H1 (cell line): ENCODE measurements at regions of chr12 and their contacts with region 1.

Region 1: DNA sequence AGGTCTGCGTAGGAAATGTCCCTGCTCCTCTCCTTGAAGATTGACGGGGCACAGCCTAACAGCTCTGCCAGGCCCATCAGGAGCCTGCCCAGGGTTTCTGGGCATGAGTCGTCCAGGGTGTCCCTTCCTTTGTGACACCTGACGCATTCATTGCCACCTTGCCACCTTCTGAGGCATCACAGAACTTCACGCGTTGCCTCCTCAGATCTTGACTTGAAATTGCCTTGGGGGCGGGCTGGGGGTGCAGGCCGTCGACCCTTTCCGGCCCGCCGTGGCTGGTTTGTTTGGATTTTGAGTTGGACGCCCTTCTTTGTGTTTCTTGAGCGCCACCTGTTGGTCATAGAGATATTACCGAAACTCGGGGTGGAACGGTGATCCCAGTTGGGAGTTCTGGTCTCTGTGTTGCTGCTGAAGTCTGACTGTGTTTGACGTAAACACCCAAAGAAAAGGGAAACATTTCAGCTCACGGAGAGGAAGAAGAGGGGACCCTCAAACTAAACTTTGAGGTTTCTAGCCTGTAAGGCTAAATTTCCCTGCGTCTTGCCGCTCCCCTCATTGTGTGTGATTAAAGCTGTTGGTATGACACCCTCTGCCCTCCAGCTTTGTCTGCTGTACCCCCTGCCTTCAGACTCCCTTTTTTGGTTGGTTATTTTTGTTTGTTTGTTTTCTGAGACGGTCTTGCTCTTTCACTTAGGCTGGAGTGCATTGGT is 44.6 kb downstream of the MLXIP start:
- DNase-seq: peak in 1 of 2 experiments; percentile 92
- H3K4me3 ChIP-seq: no peak overlapping the region
- H3K27ac ChIP-seq: no peak overlapping the region
- H3K4me1 ChIP-seq: peaks cover 0 to 6% (median 3%) of the 10 kb centered on the region in 4 experiments; a peak in 4 of 7 replicates
- H3K27me3 ChIP-seq: no peaks in the 10 kb centered on the region
- CTCF ChIP-seq: peak; percentile 42 to 73 (median 68)
- EP300 ChIP-seq: no peak
- POLR2A ChIP-seq: no peak
- RAD21 ChIP-seq: peak; percentile 76 to 87

Region 2: GRCh38 chr12:122064025-122064777 is 59.0 kb before region 1 on chr12:
- CTCF ChIA-PET with region 1: interaction called, 379 read pairs
- POLR2A ChIA-PET with region 1: interaction called, 4 read pairs
- DNase-seq: peak; percentile 87 to 88
- H3K4me3 ChIP-seq: peak overlapping the region; percentile 2 to 44 (median 10); a peak in 4 of 8 replicates
- H3K27ac ChIP-seq: 0 out of 2 replicates have a peak overlapping the region, but pooled peaks have one; percentile 24
- H3K4me1 ChIP-seq: peaks cover 0 to 21% (median 10%) of the 10 kb centered on the region in 4 experiments; a peak in 6 of 7 replicates
- H3K27me3 ChIP-seq: no peaks in the 10 kb centered on the region
- CTCF ChIP-seq: peak; percentile 45 to 78 (median 47)
- EP300 ChIP-seq: no peak
- POLR2A ChIP-seq: peak in 1 of 2 experiments; percentile 27; a peak in 1 of 3 replicates
- RAD21 ChIP-seq: peak; percentile 25 to 40

Region 3: DNA sequence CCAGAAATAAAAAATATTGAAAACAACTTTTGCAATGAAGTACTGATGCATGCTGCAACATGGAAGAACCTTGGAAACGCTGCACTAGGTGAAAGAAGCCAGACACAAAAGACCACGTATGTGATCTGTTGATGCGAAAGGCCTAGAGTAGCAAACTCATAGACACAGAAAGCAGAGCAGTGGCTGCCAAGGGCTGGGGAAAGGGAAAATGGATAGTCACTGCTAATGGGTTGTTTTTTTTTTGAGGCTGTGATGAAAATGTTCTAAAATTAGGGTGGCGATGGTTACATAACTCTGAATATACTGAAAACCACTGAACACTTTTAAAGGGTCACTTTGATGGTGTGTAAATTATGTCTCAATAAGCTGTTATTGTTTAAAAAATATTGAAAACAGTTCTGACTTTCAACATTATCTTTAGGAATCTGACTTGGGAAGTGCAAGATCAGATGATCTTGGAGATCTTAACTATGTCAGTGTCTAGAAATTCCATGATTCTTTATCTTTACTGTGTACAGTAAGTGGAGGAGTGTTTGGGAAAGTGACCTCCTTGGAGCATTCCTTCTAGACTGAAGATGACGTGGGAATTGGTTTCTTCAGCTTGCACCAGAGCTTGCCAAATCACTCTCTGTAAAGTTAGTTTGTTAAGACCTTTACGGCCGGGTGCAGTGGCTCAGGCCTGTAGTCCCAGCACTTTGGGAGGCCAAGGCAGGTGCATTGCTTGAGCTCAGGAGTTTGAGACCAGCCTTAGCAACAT is 32.3 kb before region 1 on chr12:
- CTCF ChIA-PET with region 1: interaction called, 52 read pairs
- POLR2A ChIA-PET with region 1: interaction called, 3 read pairs
- DNase-seq: no peak
- H3K4me3 ChIP-seq: no peak overlapping the region
- H3K27ac ChIP-seq: no peak overlapping the region
- H3K4me1 ChIP-seq: peaks cover 0 to 4% (median 1%) of the 10 kb centered on the region in 4 experiments; a peak in 4 of 7 replicates
- H3K27me3 ChIP-seq: no peaks in the 10 kb centered on the region; a peak in 1 of 7 replicates
- CTCF ChIP-seq: no peak
- EP300 ChIP-seq: no peak
- POLR2A ChIP-seq: no peak
- RAD21 ChIP-seq: no peak

Region 4: DNA sequence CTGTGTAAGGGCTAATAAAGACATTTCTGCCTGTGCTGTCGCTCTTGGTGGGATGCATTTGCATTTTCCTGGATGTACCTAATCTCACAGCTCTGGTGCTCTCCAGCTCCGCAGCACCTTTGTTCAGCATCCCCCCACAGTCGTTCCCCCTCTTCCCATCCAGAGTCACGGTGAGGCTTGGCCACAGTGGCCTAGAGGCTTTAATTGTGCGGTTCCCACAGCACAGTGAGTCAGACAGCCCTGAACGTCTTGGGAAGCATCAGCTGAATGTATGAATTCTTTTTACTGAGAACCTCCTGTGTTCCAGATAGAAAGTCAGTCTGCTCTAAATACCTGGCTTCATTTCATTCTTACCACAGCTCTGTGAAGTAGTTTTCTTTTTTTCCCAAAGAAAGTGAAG is 15.9 kb before region 1 on chr12:
- CTCF ChIA-PET with region 1: interaction called, 24 read pairs
- POLR2A ChIA-PET with region 1: interaction called, 4 read pairs
- DNase-seq: no peak
- H3K4me3 ChIP-seq: no peak overlapping the region
- H3K27ac ChIP-seq: no peak overlapping the region
- H3K4me1 ChIP-seq: no peaks in the 10 kb centered on the region; a peak in 1 of 7 replicates
- H3K27me3 ChIP-seq: no peaks in the 10 kb centered on the region
- CTCF ChIP-seq: no peak
- EP300 ChIP-seq: no peak
- POLR2A ChIP-seq: no peak
- RAD21 ChIP-seq: no peak

Region 5: DNA sequence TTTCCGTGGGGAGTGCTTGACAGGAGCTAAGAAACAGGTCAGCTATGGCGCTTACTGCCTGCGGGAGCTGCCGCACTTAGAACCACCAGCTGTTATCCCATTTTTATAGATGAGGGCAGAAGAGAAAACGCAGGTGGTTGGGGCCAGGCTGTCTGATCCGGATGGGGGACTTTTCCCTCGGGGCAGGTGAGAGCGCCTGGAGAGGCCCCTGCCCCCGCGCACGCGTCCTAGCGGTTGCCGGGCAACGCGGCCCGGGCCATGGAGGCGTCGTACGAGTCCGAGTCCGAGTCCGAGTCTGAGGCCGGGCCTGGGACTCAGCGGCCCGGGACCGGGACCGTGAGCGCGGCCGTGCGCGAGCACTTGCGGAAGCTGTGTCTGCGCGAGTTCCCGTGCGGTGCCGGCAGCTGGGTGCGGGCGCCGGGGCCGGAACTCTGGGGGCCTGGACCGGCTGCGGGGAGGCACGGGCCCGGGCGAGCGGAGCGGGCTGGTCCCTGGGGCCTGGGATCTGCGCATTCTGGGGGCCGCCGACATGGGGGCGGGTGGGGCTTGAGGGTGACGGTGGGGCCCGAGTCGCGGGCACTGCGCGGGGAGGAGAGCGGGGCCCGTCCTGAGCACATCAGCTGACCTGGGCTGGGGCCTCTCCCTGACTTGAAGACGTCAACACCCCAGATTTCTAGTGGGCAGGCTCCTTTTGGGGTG is 59.8 kb after region 1 on chr12 and contains the start of gene LRRC43:
- CTCF ChIA-PET with region 1: interaction called, 10 read pairs
- POLR2A ChIA-PET with region 1: no interaction called
- DNase-seq: peak in 1 of 2 experiments; percentile 86
- H3K4me3 ChIP-seq: peak within 1 kb of the TSS; percentile 28 to 67 (median 40)
- H3K27ac ChIP-seq: no peak within 1 kb of the TSS
- H3K4me1 ChIP-seq: peaks cover 0 to 4% (median 2%) of the 10 kb centered on the region in 4 experiments; a peak in 3 of 7 replicates
- H3K27me3 ChIP-seq: peaks cover 0 to 6% (median 2%) of the 10 kb centered on the region in 4 experiments; a peak in 5 of 7 replicates
- CTCF ChIP-seq: peak in 1 of 3 experiments; percentile 7; a peak in 1 of 4 replicates
- EP300 ChIP-seq: no peak
- POLR2A ChIP-seq: no peak
- RAD21 ChIP-seq: no peak
- total RNA-seq, gene LRRC43: 0.15 and 0.35 TPM in 2 replicates

Region 6: GRCh38 chr12:122322501-122322900 is 199.3 kb after region 1 on chr12:
- CTCF ChIA-PET with region 1: no interaction called
- POLR2A ChIA-PET with region 1: no interaction called
- DNase-seq: no peak
- H3K4me3 ChIP-seq: no peak overlapping the region
- H3K27ac ChIP-seq: no peak overlapping the region
- H3K4me1 ChIP-seq: peaks cover 0 to 2% (median 0%) of the 10 kb centered on the region in 4 experiments; a peak in 1 of 7 replicates
- H3K27me3 ChIP-seq: no peaks in the 10 kb centered on the region
- CTCF ChIP-seq: no peak
- EP300 ChIP-seq: no peak
- POLR2A ChIP-seq: no peak
- RAD21 ChIP-seq: no peak